ENCODE measurements at regions of chr6 and their contacts with region 1.

Region 1: DNA sequence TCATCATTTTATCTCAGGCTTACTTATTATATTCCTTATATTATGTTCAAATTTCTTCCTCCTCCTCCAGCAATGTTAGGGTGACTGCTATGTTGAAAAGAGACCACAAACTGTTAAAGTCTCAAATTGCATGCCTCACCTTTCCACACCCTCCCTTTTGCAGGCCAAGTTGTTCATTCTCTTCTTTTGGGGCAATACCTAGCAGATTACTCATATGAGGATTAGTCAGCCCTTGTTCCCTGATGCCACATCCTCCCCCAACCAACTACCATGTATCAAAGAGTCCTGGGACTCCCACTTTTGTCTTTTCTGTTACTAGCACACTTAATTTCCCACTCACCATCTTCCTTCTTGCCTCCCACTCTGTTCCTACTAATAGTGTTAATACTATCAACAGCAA is 434.7 kb downstream of the BCKDHB start:
- DNase-seq: no peak
- H3K4me3 ChIP-seq: no peak overlapping the region
- H3K27ac ChIP-seq: no peak overlapping the region
- H3K4me1 ChIP-seq: no peaks in the 10 kb centered on the region
- H3K27me3 ChIP-seq: no peaks in the 10 kb centered on the region
- CTCF ChIP-seq: no peak
- POLR2A ChIP-seq: no peak

Region 2: DNA sequence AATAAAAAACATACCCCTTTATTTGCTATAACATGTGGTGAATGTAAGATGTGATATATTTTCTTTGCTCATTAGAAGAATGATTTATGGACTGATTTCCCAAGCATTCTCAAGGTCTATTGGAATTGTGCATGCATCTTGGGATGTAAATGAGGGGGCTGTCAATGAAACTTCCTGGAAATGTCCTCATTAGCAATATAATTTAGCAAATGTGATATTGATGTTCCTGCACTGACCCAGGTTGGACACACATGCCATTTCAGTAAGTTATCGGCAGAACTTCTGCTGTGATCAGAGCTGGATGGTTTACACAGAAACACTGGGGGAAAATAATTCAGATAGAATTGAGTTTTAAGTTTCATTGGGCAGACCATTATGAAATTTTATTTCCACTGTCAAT is 693.8 kb before region 1 on chr6:
- intact Hi-C with region 1: loop called (anchors 5 kb)
- DNase-seq: no peak
- H3K4me3 ChIP-seq: no peak overlapping the region
- H3K27ac ChIP-seq: no peak overlapping the region
- H3K4me1 ChIP-seq: no peaks in the 10 kb centered on the region
- H3K27me3 ChIP-seq: no peaks in the 10 kb centered on the region
- CTCF ChIP-seq: no peak
- POLR2A ChIP-seq: no peak

Region 3: DNA sequence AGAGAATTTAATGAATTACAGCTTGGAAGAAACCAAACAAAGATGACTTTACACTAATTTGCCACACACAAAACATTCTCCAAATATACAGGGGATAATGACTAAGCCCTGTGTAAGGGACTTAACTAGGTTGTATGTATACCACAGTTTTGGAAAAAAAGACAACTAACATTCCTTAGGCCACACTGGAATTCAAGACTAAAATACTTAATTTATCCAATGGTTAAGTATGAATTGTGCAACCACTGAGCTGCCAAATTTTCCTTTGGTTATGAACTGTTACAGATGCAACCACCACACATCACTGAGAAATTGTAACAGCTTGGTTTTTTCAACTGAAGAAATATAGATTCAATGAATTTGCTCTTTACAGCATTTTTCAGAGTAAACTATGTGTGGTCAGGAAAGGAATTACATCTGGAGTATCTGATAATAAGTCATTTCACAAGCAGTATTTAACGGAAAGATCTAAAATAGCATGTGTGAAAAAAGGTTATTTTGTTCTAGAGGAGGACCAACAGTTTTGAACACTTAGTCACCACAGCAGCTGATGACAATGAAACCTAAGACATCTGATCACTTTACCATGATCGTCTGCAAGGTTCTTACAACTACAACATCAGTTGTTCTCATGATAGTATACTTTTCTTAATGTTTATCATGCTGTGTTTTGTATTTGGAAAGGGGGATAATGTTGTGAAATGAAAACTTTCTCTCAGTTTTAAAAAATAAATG is 115.9 kb before region 1 on chr6:
- intact Hi-C with region 1: no loop called
- DNase-seq: no peak
- H3K4me3 ChIP-seq: no peak overlapping the region
- H3K27ac ChIP-seq: no peak overlapping the region
- H3K4me1 ChIP-seq: no peaks in the 10 kb centered on the region
- H3K27me3 ChIP-seq: no peaks in the 10 kb centered on the region
- CTCF ChIP-seq: no peak
- POLR2A ChIP-seq: no peak

Region 4: DNA sequence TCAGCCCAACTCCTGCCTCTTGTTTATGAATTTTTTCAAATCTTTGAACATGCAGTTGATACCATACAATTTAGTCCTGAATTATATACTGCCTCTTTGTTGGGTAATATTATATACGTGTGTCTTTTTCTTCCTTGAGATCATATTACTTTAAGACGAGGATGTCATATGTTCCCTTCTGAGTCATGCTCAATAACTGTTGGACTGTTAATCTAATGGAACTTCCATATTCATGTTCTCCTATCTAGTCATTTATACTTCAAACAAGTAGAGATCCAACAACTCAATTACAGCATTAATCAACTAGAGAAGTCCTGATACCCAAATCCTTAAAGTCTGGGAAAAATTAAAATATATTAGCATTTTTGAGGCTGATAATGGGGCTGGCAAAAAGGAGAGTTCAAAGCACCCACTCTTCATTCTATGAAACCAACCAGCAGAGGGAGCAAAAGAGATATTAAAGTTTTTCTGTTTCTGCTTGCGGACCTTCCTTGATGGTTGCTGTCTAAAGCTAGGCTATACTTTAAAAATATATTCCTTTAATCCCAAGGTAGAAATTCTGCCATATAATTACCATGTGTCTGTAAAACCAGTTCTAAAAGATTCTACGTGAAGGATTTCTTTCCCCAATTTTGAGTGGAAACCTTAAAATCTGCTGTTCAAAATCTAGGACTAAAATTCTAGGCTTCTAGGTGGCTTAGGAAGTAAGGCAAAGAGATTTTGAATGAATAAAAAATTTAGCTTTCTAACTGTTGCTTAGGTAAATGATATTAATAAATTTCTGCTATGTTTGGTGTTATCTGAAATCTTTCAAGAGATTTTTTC is 64.2 kb after region 1 on chr6:
- intact Hi-C with region 1: no loop called
- DNase-seq: no peak
- H3K4me3 ChIP-seq: no peak overlapping the region
- H3K27ac ChIP-seq: no peak overlapping the region
- H3K4me1 ChIP-seq: no peaks in the 10 kb centered on the region
- H3K27me3 ChIP-seq: no peaks in the 10 kb centered on the region
- CTCF ChIP-seq: peak; percentile 37 to 46 (median 38)
- POLR2A ChIP-seq: no peak